HEK293 (cell line): ENCODE measurements at regions of chr4 and their contacts with region 1.

Region 1: DNA sequence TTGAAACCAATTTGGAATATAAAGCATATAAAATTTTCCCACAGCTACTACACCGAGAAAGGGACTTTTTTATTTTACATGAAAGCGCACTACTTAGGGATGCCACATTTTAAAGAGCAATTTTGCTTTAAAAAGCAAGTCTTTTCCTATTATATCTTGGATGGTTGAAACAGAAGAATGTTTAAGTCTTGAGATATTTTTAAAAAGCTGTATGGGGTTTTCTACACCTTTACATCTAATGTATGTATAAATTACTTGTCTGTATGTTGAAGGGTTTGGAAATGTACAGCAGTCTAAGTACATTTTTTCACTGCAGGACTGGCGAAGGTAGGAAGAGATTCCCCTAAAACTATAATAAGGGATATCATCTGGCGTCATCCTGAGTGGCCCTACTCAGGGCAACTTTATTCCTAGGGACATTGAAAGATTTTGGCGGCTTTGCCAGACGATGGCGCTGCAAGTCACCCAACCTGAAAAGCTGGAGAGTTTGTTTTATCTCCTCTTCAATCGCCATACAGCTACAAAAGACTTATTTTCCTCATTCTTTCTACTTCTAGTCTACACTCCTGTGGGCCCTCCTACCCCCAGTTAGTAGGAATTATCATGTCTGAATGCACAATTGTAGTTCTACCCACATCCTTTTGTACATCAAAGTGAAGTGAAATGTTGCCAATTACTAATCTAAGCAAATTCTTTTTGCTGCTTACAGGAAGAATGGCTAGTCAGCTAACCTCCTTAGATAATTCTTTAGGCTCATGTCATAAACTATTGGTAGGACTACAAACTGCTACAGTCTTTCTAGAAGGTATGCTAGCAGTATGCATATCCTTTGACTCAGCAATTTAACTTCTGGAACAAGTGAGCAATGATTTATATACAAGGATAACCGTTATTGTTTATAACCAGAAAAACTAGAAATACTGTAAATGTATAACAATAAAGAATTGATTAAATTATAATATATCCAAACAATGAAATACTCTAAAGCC is 782 bp upstream of the NEK1 start:
- H3K4me3 ChIP-seq: peak overlapping the region; percentile 97
- H3K27ac ChIP-seq: no peak overlapping the region
- H3K4me1 ChIP-seq: no peaks in the 10 kb centered on the region
- CTCF ChIP-seq: no peak

Region 2: GRCh38 chr4:168972596-168972995 is 640.6 kb before region 1 on chr4:
- CTCF ChIA-PET with region 1: no interaction called
- POLR2A ChIA-PET with region 1: no interaction called
- H3K4me3 ChIP-seq: no peak overlapping the region
- H3K27ac ChIP-seq: no peak overlapping the region
- H3K4me1 ChIP-seq: no peaks in the 10 kb centered on the region
- CTCF ChIP-seq: no peak

Region 3: DNA sequence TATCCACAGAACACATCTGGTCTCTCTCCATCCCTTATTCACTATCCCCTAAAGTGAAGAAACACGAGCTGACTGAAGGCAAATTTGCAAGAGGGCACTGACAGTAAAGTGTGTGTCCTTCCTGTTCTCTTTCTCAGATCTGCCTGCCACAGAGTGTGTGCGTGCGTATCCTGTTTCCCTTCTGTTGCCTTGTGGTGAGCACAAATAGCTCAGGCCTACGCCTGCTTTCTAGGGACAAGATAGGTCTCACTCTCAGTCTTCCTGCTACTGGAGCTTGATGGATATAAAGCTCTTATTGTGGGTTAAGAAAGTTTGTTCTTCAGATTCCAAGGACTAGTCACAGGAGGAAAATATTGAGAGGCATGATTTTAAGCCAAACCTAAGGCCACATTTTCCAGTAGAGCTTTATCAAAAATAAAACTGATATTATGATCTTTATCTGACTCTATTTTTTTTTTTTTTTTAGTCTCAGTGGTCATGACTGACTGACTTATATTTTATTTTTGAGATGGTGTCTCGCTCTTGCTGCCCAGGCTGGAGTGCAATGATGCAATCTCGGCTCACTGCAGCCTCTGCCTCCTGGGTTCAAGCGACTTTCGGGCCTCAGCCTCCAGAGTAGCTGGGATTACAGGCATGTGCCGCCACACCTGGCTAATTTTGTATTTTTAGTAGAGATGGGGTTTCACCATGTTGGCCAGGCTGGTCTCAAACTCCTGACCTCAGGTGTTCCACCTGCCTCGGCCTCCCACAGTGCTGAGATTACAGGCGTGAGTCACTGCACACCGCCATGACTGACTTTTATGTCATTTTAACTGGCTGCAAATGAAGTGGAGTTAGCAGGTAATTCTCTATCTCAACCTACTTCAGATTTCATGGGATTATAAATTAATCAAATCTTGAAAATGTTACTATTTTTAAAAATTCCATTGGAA is 202.1 kb before region 1 on chr4:
- CTCF ChIA-PET with region 1: no interaction called
- POLR2A ChIA-PET with region 1: no interaction called
- H3K4me3 ChIP-seq: no peak overlapping the region
- H3K27ac ChIP-seq: no peak overlapping the region
- H3K4me1 ChIP-seq: no peaks in the 10 kb centered on the region
- CTCF ChIP-seq: no peak

Region 4: GRCh38 chr4:169707958-169708643 is 94.9 kb after region 1 on chr4:
- CTCF ChIA-PET with region 1: interaction called, 10 read pairs
- POLR2A ChIA-PET with region 1: no interaction called
- H3K4me3 ChIP-seq: no peak overlapping the region
- H3K27ac ChIP-seq: no peak overlapping the region
- H3K4me1 ChIP-seq: no peaks in the 10 kb centered on the region
- CTCF ChIP-seq: no peak

Region 5: DNA sequence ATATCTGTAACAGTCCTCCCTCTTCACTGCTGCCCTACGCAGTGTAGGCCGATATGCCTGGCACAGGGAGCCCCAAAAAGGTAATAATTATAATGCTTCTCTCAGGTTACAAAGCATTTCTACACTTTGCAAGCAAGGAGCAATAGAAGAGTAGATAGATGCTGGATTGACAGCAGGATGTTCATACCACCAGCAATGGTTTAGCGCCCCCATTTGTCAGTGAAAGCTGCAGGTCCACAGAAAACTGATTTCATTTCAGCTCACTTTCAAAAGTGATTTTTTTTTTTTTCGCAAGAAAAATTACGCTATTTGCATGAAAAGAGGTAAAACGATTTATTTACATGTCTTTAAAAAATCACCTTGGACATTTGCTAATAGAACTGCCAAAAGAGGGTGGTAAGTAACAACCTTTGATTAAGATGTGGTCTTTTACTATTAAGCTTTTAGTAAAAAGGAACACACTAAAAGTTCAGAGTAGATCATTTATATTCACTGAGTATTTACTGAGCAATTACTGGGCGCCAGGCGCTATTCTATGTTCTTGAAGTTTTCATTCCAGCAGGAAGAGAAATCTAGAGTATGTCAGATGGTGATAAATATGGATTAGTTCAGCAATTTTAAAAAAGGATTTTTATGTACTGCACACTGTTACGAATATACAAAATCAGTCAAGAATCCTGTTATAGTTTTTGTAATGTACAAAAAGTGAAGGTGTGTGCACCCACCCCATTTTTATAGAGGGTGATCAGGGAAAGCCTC is 110.2 kb after region 1 on chr4:
- CTCF ChIA-PET with region 1: interaction called, 14 read pairs
- POLR2A ChIA-PET with region 1: no interaction called
- H3K4me3 ChIP-seq: no peak overlapping the region
- H3K27ac ChIP-seq: no peak overlapping the region
- H3K4me1 ChIP-seq: no peaks in the 10 kb centered on the region
- CTCF ChIP-seq: no peak

Region 6: DNA sequence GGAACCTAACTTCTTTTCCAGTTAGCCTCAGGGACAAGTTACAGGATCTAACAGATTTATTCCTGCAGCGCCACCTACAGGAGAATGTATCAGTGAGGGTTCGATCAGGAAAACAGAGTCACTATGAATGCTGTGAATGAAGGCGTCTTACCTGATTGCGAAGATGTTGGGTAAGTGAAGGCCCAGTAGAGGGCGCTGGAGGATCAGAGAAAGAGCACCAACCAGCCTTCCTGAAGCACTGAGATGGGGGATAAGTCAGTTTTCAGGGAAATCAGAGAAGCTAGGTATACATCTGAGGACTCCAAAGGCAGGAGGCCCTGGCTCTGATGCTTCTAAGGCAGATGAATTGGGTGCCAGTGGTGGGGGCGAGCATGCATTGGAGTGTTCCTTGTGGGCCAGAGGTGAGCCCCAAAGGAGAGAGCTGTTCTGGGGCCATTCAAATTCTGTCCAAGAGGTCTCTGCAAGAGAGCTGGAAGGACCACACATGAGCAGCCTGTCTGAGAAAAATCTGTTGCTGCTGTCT is 646.5 kb after region 1 on chr4:
- CTCF ChIA-PET with region 1: no interaction called
- POLR2A ChIA-PET with region 1: no interaction called
- H3K4me3 ChIP-seq: no peak overlapping the region
- H3K27ac ChIP-seq: no peak overlapping the region
- H3K4me1 ChIP-seq: no peaks in the 10 kb centered on the region
- CTCF ChIP-seq: peak; percentile 76